Spleen (tissue), 13 donors: ENCODE measurements at regions of chr11 and their contacts with region 1.

Region 1: DNA sequence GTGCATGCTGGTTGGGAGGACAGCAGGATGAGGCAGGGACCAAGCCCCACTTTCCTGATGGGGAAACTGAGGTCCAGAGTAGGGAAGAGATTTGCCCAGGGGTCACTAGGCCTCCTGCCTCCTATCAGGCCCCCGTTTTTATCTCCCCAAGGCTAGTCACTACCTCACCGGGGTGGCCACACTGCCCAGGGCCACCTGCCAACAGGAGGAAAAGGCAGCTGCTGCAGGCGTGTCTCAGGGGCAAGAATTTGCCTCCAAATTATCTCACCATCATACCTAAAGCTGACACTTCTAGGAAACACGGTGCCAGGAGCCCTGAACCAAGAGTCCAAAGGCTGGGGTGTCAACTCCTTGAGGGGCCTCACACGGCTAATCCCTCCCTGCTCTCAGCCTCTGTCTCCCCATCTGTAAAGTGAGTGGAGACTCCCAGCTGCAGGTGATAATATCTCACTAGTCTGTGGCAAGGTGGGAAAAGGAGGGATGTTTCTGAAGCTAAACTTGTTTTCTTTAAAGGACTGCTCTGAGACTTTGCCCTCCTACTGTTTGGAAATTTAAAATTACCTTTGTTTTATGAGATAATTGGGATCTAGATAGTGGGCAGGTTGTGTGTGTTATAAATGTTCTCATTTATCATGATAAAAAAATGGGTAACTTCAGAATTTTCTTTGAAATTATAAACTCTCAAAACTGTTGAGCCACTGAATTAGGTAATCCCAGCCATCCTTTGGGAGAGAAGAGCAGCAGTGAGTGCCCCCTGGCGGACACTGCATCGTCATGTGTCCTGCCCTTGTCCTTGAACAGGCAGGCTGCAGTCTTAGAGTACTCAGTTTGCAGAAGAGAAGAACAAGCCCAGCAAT is 60.0 kb downstream of the MYO7A start:
- DNase-seq: peak; percentile 88
- H3K4me3 ChIP-seq: no peak overlapping the region
- H3K27ac ChIP-seq: no peak overlapping the region
- H3K4me1 ChIP-seq: no peaks in the 10 kb centered on the region
- H3K27me3 ChIP-seq: no peaks in the 10 kb centered on the region
- CTCF ChIP-seq: peak; percentile 59 to 91 (median 87)
- POLR2A ChIP-seq: no peak

Region 2: DNA sequence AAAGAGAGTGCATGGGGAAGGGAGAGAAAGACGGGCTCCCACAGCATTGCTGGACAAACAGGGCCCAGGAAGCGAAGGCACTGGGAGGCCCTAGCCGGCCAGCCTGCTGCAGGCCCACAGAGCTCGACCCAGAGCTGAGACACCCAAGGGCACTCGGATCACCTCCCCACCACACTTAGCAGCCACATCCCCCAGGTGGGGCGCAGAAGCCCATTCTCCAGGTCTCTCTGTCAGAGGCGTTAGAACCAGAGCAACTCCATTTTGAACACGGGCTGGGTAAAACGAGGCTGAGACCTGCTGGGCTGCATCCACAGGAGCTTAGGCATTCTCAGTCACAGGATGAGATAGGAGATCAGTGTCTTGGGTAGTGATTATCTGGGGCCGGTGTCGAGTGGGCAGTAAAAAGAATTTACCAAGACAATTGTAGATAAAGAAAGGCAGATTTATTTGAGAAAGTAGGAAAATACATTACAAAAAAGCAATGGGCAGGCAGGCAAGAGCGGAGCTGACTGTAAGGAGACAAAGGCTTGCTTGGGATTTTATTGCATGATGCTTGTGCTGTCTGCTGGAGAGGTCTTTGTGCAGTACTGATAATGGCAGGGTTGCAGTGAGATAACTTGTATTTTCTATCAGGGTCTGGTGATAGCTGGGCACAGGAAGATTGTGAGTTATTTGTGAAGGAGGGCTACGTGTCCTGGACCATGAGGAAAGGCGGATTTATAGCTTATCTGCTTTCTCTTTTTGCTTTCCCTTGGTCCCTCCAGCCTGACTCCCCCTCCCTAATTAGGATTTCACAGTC is 134.6 kb before region 1 on chr11:
- intact Hi-C with region 1: loop called (anchors 10 kb)
- DNase-seq: no peak
- H3K4me3 ChIP-seq: no peak overlapping the region
- H3K27ac ChIP-seq: no peak overlapping the region
- H3K4me1 ChIP-seq: no peaks in the 10 kb centered on the region
- H3K27me3 ChIP-seq: no peaks in the 10 kb centered on the region
- CTCF ChIP-seq: no peak
- POLR2A ChIP-seq: no peak

Region 3: GRCh38 chr11:77127232-77127911 is 60.6 kb before region 1 on chr11:
- intact Hi-C with region 1: loop called (anchors 5 kb)
- DNase-seq: peak; percentile 86
- H3K4me3 ChIP-seq: peak overlapping the region; percentile 28 to 64 (median 34)
- H3K27ac ChIP-seq: no peak overlapping the region
- H3K4me1 ChIP-seq: peaks cover 13 to 22% (median 18%) of the 10 kb centered on the region in 6 donors
- H3K27me3 ChIP-seq: peaks cover 0 to 27% (median 0%) of the 10 kb centered on the region in 7 donors
- CTCF ChIP-seq: peak; percentile 78 to 98 (median 96)
- POLR2A ChIP-seq: no peak

Region 4: DNA sequence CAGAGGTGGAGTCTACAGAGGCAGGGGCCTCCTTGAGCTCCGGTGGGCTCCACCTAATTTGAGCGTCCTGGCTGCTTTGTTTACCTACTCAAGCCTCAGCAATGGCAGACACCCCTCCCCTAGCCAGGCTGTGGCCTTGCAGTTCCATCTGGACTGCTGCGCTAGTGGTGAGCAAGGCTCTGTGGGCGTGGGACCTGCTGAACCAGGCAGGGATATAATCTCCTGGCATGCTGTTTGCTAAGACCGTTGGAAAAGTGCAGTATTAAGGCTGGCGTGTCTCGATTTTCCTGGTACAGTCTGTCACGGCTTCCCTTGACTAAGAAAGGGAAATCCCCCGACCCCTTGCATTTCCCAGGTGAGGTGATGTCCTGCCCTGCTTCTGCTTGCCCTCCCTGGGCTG is 35.8 kb after region 1 on chr11:
- intact Hi-C with region 1: no loop called
- DNase-seq: no peak
- H3K4me3 ChIP-seq: no peak overlapping the region
- H3K27ac ChIP-seq: no peak overlapping the region
- H3K4me1 ChIP-seq: no peaks in the 10 kb centered on the region
- H3K27me3 ChIP-seq: peaks cover 0 to 6% (median 0%) of the 10 kb centered on the region in 7 donors
- CTCF ChIP-seq: no peak
- POLR2A ChIP-seq: no peak

Region 5: GRCh38 chr11:77547863-77548551 is 360.0 kb after region 1 on chr11:
- intact Hi-C with region 1: loop called (anchors 10 kb)
- DNase-seq: no peak
- H3K4me3 ChIP-seq: no peak overlapping the region
- H3K27ac ChIP-seq: no peak overlapping the region
- H3K4me1 ChIP-seq: peaks cover 0 to 8% (median 2%) of the 10 kb centered on the region in 6 donors
- H3K27me3 ChIP-seq: no peaks in the 10 kb centered on the region
- CTCF ChIP-seq: peak in 9 of 11 experiments; percentile 29 to 68 (median 55)
- POLR2A ChIP-seq: no peak